ENCODE measurements at regions of chr13 and their contacts with region 1.

Region 1: GRCh38 chr13:46934749-46935148 is 37.9 kb upstream of the HTR2A start:
- DNase-seq: no peak
- ATAC-seq: no peak
- H3K4me3 ChIP-seq: no peak overlapping the region
- H3K4me3 Mint-ChIP-seq: no peak overlapping the region
- H3K27ac ChIP-seq: no peak overlapping the region
- H3K27ac Mint-ChIP-seq: no peak overlapping the region
- H3K4me1 ChIP-seq: no peaks in the 10 kb centered on the region
- H3K4me1 Mint-ChIP-seq: no peaks in the 10 kb centered on the region
- H3K27me3 ChIP-seq: peaks cover 3 to 11% of the 10 kb centered on the region in 2 experiments
- H3K27me3 Mint-ChIP-seq: peaks cover 46% of the 10 kb centered on the region
- CTCF ChIP-seq: no peak

Region 2: GRCh38 chr13:46553886-46554858 is 380.6 kb before region 1 on chr13:
- CTCF ChIA-PET with region 1: no interaction called
- POLR2A ChIA-PET with region 1: no interaction called
- intact Hi-C with region 1: no loop called
- DNase-seq: peak; percentile 33 to 92 (median 52)
- ATAC-seq: peak; percentile 57
- H3K4me3 ChIP-seq: peak overlapping the region; percentile 97
- H3K4me3 Mint-ChIP-seq: peak overlapping the region; percentile 97
- H3K27ac ChIP-seq: peak overlapping the region; percentile 72 to 89
- H3K27ac Mint-ChIP-seq: peak overlapping the region; percentile 89
- H3K4me1 ChIP-seq: peaks cover 29% of the 10 kb centered on the region
- H3K4me1 Mint-ChIP-seq: peaks cover 56% of the 10 kb centered on the region
- H3K27me3 ChIP-seq: peaks cover 0 to 6% of the 10 kb centered on the region in 2 experiments
- H3K27me3 Mint-ChIP-seq: no peaks in the 10 kb centered on the region
- CTCF ChIP-seq: peak; percentile 23

Region 3: GRCh38 chr13:46964789-46965527 is 30.2 kb after region 1 on chr13:
- CTCF ChIA-PET with region 1: no interaction called
- POLR2A ChIA-PET with region 1: no interaction called
- intact Hi-C with region 1: loop called in 1 of 2 experiments (anchors 2 kb)
- DNase-seq: peak in 1 of 14 experiments; percentile 11
- ATAC-seq: no peak
- H3K4me3 ChIP-seq: no peak overlapping the region
- H3K4me3 Mint-ChIP-seq: no peak overlapping the region
- H3K27ac ChIP-seq: no peak overlapping the region
- H3K27ac Mint-ChIP-seq: no peak overlapping the region
- H3K4me1 ChIP-seq: no peaks in the 10 kb centered on the region
- H3K4me1 Mint-ChIP-seq: no peaks in the 10 kb centered on the region
- H3K27me3 ChIP-seq: peaks cover under 1 to 4% of the 10 kb centered on the region in 2 experiments
- H3K27me3 Mint-ChIP-seq: peaks cover 7% of the 10 kb centered on the region
- CTCF ChIP-seq: no peak